Common myeloid progenitor, CD34-positive (primary cell): ENCODE measurements at regions of chr4 and their contacts with region 1.

Region 1: GRCh38 chr4:2954358-2955185 is 8.6 kb downstream of the NOP14 start:
- DNase-seq: peak; percentile 30 to 57 (median 55)
- H3K4me3 ChIP-seq: no peak overlapping the region
- H3K27ac ChIP-seq: no peak overlapping the region
- H3K4me1 ChIP-seq: no peaks in the 10 kb centered on the region
- H3K27me3 ChIP-seq: no peaks in the 10 kb centered on the region

Region 2: DNA sequence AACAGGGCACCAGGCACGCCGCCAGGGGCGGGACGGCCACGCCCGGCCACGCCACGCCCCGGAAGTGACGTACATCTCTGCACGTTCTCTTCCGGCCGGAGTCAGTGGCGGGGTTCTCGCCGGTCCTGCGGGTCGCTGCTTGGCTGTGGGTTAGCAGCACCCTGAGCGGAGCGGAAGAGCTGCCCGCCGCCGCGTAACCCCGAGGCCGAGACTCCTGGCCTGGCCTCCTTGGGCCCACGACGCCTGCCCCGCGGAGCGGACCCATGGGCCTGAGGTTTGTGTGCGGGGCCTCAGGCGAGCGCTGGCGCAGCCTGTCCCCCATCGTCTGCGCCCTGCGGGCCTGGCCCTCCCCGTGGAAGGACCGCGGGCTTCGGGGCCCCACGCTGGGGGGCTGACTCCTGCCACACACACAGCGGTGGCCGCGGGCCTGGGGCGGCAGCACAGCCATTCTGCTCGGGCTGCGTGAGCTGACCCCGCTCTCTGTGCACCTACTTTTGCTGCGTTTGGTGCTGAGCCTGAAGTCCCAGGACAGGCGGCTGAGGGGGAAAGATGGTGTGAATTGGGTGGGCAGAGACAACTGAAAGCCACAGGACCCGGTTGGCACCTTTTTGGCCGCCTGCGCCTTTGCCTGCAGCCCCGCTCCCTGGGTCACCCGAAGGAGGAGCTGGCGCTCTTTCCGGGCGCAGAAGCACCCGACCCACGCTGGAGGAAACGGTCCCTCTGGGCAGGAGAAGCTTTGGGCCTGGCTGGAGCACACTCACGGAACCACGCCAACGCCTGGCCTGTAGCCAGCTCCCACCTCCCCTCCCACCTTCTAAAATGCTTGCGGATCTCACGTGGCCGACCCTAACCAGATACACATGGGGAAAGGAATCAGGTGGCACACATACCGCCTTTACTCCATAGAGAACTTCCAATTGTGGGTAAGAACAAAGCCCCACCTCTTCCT is 19.5 kb before region 1 on chr4:
- CTCF ChIA-PET with region 1: interaction called, 23 read pairs
- POLR2A ChIA-PET with region 1: no interaction called
- DNase-seq: peak; percentile 91 to 95 (median 93)
- H3K4me3 ChIP-seq: peak overlapping the region; percentile 80 to 95 (median 88)
- H3K27ac ChIP-seq: peak overlapping the region; percentile 66 to 79
- H3K4me1 ChIP-seq: peaks cover 6 to 47% (median 41%) of the 10 kb centered on the region in 4 experiments
- H3K27me3 ChIP-seq: no peaks in the 10 kb centered on the region

Region 3: DNA sequence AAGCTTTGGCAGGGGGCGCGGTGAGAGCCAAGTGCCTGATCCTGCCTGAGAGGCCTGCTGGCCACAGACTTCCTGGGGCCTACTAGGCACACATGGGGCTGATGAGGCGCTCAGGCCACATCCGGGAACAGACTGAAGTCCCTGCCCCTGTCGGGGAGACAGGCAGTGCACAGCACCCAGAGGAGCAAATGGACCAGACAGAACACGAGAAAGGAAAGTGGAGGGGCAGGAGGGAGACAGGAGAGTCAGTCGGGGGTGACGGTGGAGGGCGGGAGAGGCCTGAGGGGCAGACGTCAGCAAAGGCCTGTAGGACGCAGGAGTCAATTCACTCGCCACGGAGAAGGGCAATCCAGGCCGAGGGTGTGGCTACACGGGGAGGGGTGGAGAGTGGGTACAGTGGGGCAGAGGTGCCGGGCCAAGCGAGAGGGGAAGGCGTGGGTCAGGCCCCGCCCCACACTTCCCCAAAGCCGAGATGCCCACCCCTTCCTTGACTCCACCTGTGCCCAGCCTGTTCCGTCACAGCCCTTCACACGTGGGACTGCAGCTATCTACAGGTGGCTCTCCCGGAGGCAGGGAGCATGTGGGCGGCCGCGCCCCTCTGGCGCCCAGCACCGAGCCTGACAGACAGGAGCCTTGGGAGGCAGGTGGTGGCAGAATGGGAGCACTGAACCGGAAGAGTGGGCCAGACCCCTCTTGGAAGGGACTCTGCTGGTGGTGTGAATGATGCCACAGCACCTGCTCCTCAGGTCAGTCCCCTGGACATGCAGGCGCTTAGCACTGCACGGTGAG is 11.8 kb before region 1 on chr4:
- CTCF ChIA-PET with region 1: interaction called, 23 read pairs
- POLR2A ChIA-PET with region 1: no interaction called
- DNase-seq: no peak
- H3K4me3 ChIP-seq: no peak overlapping the region
- H3K27ac ChIP-seq: no peak overlapping the region
- H3K4me1 ChIP-seq: no peaks in the 10 kb centered on the region
- H3K27me3 ChIP-seq: no peaks in the 10 kb centered on the region

Region 4: DNA sequence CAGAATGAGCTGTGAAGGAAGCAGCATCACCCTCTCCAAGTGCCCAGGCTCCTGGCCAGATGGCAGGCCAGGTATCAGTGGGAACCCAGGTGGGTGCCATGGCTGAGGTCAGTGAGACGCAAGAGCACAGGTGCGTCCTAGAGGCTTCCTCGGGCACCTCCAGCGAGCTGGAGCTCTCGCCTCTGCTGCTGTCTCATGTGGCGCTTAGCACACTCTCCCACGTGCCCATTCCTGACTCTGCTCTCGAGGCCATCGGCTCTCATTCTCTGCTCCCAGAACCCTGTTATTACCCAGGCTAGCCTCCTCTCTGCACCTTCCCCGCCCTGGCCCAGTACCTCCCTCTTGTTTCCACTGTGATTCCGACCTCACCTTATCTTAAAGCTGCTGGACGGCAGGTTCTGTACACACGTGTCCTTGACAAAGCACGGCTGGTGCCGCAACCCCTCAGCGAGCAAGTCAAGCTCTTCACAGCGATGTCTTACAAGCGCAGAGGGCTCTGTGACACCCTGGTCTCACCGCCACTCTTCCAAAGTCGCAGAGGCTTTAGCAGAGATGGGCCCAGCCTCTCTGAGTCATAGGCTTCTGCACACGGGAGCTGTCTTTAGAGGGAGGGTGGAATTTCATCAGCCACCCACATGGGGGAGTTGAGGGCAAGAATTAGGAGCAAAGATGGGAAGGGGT is 279.0 kb after region 1 on chr4:
- CTCF ChIA-PET with region 1: no interaction called
- POLR2A ChIA-PET with region 1: no interaction called
- DNase-seq: no peak
- H3K4me3 ChIP-seq: no peak overlapping the region
- H3K27ac ChIP-seq: no peak overlapping the region
- H3K4me1 ChIP-seq: no peaks in the 10 kb centered on the region
- H3K27me3 ChIP-seq: no peaks in the 10 kb centered on the region

Region 5: GRCh38 chr4:3318561-3319021 is 364.0 kb after region 1 on chr4:
- CTCF ChIA-PET with region 1: no interaction called
- POLR2A ChIA-PET with region 1: no interaction called
- DNase-seq: no peak
- H3K4me3 ChIP-seq: no peak overlapping the region
- H3K27ac ChIP-seq: no peak overlapping the region
- H3K4me1 ChIP-seq: no peaks in the 10 kb centered on the region
- H3K27me3 ChIP-seq: no peaks in the 10 kb centered on the region